G401 (cell line): ENCODE measurements at regions of chr14 and their contacts with region 1.

Region 1: DNA sequence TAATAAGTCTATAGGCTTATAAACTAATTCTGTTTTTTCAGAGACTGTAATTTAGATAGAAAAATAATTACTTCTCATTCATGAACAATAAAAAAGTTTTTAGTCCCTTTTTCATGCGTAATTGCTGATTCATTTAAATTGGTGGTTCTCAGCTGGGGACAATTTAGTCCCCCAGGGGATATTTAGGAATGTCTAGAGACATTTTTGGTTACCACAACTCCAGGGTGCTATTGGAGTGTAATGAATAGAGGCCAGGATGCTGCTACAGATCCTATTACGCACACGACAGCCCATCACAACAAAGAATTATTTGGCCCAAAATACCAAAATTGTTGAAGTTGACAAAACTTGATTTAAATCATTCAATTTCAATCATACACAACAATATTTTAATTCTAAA is 22.8 kb upstream of the VCPKMT start:
- DNase-seq: no peak

Region 2: DNA sequence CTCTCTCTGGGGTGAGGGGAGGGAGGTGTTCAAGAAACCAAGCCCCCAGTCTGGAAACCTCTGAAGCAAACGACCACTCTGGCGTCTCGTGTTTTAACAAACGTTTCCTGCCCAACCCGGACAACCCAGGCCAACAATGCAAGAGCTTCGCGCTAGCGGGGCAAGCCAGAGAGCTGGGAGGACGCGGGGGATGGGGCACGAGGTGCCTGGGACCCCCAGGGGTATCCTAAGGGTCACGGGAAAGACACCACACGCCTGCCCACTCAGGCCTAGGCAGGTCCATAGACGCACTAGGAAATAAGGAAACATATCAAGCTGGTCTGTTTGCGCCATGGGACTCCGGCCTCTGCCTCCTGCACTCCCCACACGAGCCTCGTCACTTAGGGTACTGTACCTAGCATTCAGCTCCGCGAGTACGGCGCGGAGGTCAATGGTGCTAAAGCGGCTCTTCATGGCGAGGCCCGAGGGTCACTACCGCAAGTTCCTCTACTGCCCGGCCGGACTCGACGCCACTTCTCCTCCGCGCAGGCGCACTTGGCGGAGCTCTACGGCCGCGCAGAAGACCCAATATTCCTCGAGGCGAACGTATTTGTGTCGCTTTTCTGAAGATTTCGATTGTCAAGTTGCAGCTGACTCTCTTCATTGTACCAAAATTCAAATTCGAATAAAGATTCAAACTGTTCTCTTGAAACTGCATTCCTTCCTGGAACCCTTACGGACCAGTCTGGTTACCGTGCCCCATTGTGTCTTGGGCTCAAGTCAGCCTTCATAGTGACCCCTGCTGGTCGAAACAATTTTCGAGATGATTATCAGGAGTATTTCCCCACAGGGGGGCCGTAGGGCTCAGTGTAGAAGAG is 286.7 kb before region 1 on chr14 and contains the start of gene NEMF:
- in situ Hi-C with region 1: loop called (anchors 25 kb)
- DNase-seq: peak; percentile 91
- total RNA-seq, gene NEMF: 31.1 and 61.2 TPM in 2 replicates